ENCODE measurements at regions of chr12 and their contacts with region 1.

Region 1: GRCh38 chr12:109804820-109805761 is 28.1 kb downstream of the TRPV4 start:
- DNase-seq: peak; percentile 65 to 81
- ATAC-seq: peak; percentile 83 to 98 (median 93)
- H3K4me3 ChIP-seq: no peak overlapping the region
- H3K4me3 Mint-ChIP-seq: no peak overlapping the region
- H3K27ac ChIP-seq: no peak overlapping the region
- H3K27ac Mint-ChIP-seq: no peak overlapping the region
- H3K4me1 ChIP-seq: peaks cover 5% of the 10 kb centered on the region
- H3K4me1 Mint-ChIP-seq: peaks cover 0 to 4% of the 10 kb centered on the region in 2 donors
- H3K27me3 ChIP-seq: no peaks in the 10 kb centered on the region
- H3K27me3 Mint-ChIP-seq: peaks cover 0 to 3% of the 10 kb centered on the region in 2 donors
- CTCF ChIP-seq: peak; percentile 98

Region 2: GRCh38 chr12:109110988-109111495 is 694.0 kb before region 1 on chr12:
- intact Hi-C with region 1: no loop called
- DNase-seq: peak in 1 of 2 donors; percentile 71
- ATAC-seq: peak; percentile 61 to 74 (median 64)
- H3K4me3 ChIP-seq: peak overlapping the region; percentile 44
- H3K4me3 Mint-ChIP-seq: peak overlapping the region; percentile 60
- H3K27ac ChIP-seq: peak overlapping the region; percentile 55
- H3K27ac Mint-ChIP-seq: peak overlapping the region in 1 of 2 donors; percentile 29
- H3K4me1 ChIP-seq: no peaks in the 10 kb centered on the region
- H3K4me1 Mint-ChIP-seq: peaks cover 0 to 9% of the 10 kb centered on the region in 2 donors
- H3K27me3 ChIP-seq: no peaks in the 10 kb centered on the region
- H3K27me3 Mint-ChIP-seq: no peaks in the 10 kb centered on the region
- CTCF ChIP-seq: no peak

Region 3: GRCh38 chr12:109844983-109845823 is 40.1 kb after region 1 on chr12:
- intact Hi-C with region 1: loop called (anchors 2 kb)
- DNase-seq: peak; percentile 91 to 93
- ATAC-seq: peak; percentile 96 to 100 (median 99)
- H3K4me3 ChIP-seq: peak overlapping the region; percentile 12
- H3K4me3 Mint-ChIP-seq: peak overlapping the region; percentile 28
- H3K27ac ChIP-seq: no peak overlapping the region
- H3K27ac Mint-ChIP-seq: no peak overlapping the region
- H3K4me1 ChIP-seq: peaks cover 12% of the 10 kb centered on the region
- H3K4me1 Mint-ChIP-seq: peaks cover 7 to 12% of the 10 kb centered on the region in 2 donors
- H3K27me3 ChIP-seq: no peaks in the 10 kb centered on the region
- H3K27me3 Mint-ChIP-seq: no peaks in the 10 kb centered on the region
- CTCF ChIP-seq: peak; percentile 99

Region 4: DNA sequence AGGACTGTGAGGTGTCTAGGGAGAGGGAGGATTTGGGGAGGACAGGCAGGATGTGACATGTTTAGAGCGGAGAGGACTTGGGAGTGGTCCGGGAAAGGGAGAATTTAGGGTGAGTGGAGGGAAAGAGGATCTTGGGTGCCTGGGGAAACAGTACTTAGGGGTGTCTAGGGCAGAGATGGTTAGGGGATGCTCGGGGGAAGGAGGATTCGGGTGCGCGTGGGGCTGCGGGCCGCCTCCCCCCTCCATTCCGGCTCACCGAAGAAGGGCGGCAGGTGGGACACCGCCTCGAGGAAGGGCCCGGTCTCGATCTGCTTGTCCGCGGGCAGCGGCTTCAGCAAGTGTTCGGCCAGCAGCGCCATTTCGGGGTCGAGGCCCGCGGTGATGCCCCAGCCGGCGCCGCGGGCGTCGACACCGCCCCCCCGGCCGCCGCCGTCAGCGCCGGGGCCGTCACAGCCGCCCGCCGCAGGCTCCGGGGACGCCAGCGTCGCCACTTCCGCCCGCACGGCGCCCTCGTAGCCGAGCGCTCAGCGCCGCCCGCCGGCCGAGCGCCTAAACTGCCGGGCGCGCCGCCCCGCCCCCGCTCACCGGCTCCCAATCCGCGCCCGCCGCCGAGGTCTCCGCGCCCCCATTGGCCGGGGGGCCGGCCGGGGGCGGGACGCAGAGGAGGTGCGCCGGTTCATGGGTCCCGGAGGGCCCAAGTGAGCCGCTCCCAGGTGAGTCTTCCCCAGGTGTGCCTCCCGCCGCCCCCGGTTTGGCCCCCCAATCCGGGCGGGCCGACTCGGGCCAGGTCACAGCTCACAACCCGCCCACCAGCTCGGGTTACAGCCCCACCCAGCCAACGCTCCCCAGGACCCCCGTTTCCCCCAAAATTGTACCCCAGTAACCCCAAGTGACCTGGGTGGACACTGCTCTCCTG is 75.2 kb after region 1 on chr12 and contains the start of gene GLTP:
- intact Hi-C with region 1: loop called (anchors 1 kb)
- DNase-seq: peak; percentile 92 to 96
- ATAC-seq: peak; percentile 96 to 99 (median 96)
- H3K4me3 ChIP-seq: peak within 1 kb of the TSS; percentile 96
- H3K4me3 Mint-ChIP-seq: peak within 1 kb of the TSS; percentile 95
- H3K27ac ChIP-seq: peak within 1 kb of the TSS; percentile 95
- H3K27ac Mint-ChIP-seq: peak within 1 kb of the TSS; percentile 80 to 97
- H3K4me1 ChIP-seq: peaks cover 42% of the 10 kb centered on the region
- H3K4me1 Mint-ChIP-seq: peaks cover 48 to 55% of the 10 kb centered on the region in 2 donors
- H3K27me3 ChIP-seq: no peaks in the 10 kb centered on the region
- H3K27me3 Mint-ChIP-seq: no peaks in the 10 kb centered on the region
- CTCF ChIP-seq: peak; percentile 57
- total RNA-seq, gene GLTP: 48.6 to 52.8 (median 49.2) TPM

Region 5: GRCh38 chr12:109888179-109889020 is 83.3 kb after region 1 on chr12:
- intact Hi-C with region 1: loop called (anchors 2 kb)
- DNase-seq: peak; percentile 37 to 66
- ATAC-seq: peak; percentile 71 to 84 (median 83)
- H3K4me3 ChIP-seq: no peak overlapping the region
- H3K4me3 Mint-ChIP-seq: peak overlapping the region; percentile 93
- H3K27ac ChIP-seq: peak overlapping the region; percentile 92
- H3K27ac Mint-ChIP-seq: peak overlapping the region; percentile 97 to 99
- H3K4me1 ChIP-seq: peaks cover 51% of the 10 kb centered on the region
- H3K4me1 Mint-ChIP-seq: peaks cover 46 to 54% of the 10 kb centered on the region in 2 donors
- H3K27me3 ChIP-seq: no peaks in the 10 kb centered on the region
- H3K27me3 Mint-ChIP-seq: no peaks in the 10 kb centered on the region
- CTCF ChIP-seq: no peak

Region 6: GRCh38 chr12:110015132-110015531 is 210.0 kb after region 1 on chr12:
- intact Hi-C with region 1: loop called (anchors 2 kb)
- DNase-seq: peak in 1 of 2 donors; percentile 65
- ATAC-seq: peak in 2 of 3 donors; percentile 53 to 58
- H3K4me3 ChIP-seq: no peak overlapping the region
- H3K4me3 Mint-ChIP-seq: no peak overlapping the region
- H3K27ac ChIP-seq: peak overlapping the region; percentile 12
- H3K27ac Mint-ChIP-seq: peak overlapping the region; percentile 70 to 83
- H3K4me1 ChIP-seq: peaks cover 23% of the 10 kb centered on the region
- H3K4me1 Mint-ChIP-seq: peaks cover 23 to 28% of the 10 kb centered on the region in 2 donors
- H3K27me3 ChIP-seq: no peaks in the 10 kb centered on the region
- H3K27me3 Mint-ChIP-seq: no peaks in the 10 kb centered on the region
- CTCF ChIP-seq: peak; percentile 22

Measured in natural killer cell (primary cell).